PC-9 (cell line): ENCODE measurements at regions of chr22 and their contacts with region 1.

Region 1: GRCh38 chr22:31148953-31149627 is 8.8 kb upstream of the PLA2G3 start:
- DNase-seq: peak; percentile 60 to 71
- H3K4me3 ChIP-seq: no peak overlapping the region
- H3K27ac ChIP-seq: no peak overlapping the region
- H3K4me1 ChIP-seq: 0 out of 2 replicates have a peak, but pooled peaks cover 6% of the 10 kb centered on the region
- H3K27me3 ChIP-seq: no peaks in the 10 kb centered on the region
- CTCF ChIP-seq: peak; percentile 97

Region 2: DNA sequence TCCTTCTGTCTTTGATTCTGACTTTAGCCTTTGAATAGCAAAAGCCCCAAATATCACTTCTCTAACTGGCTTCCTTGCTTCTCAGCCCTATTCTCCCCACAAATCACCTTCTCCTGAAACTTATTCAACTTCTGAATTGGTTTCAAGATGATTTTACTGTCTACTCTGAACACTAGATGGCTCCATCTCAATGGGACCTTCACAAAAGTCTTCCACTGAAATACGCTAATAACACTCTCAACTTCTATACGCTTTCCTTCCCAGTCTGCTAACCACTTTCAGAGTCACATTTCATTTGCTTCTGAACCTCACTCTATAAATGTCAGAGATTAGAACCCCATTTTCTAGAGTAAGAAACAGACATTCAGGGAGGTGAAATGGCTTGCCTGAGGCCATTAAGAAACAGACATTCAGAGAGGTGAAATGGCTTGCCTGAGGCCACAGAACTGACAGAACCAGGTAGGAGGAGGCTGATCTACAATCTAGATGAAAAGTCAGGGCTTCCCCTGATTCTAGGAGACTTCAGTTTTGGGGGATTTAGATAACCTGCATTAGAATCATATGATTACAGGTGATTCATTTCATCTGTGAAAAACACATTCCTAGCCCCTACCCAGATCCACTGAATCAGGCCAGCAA is 201.2 kb before region 1 on chr22:
- CTCF ChIA-PET with region 1: no interaction called
- POLR2A ChIA-PET with region 1: no interaction called
- intact Hi-C with region 1: loop called (anchors 2 kb)
- DNase-seq: no peak
- H3K4me3 ChIP-seq: no peak overlapping the region
- H3K27ac ChIP-seq: no peak overlapping the region
- H3K4me1 ChIP-seq: no peaks in the 10 kb centered on the region
- H3K27me3 ChIP-seq: no peaks in the 10 kb centered on the region
- CTCF ChIP-seq: peak; percentile 75

Region 3: GRCh38 chr22:31080848-31081649 is 68.0 kb before region 1 on chr22 and contains the start of gene SMTN:
- CTCF ChIA-PET with region 1: no interaction called
- POLR2A ChIA-PET with region 1: no interaction called
- intact Hi-C with region 1: no loop called
- DNase-seq: peak; percentile 80 to 95
- H3K4me3 ChIP-seq: peak within 1 kb of the TSS; percentile 59
- H3K27ac ChIP-seq: no peak within 1 kb of the TSS
- H3K4me1 ChIP-seq: peaks cover 20% of the 10 kb centered on the region
- H3K27me3 ChIP-seq: no peaks in the 10 kb centered on the region
- CTCF ChIP-seq: no peak
- total RNA-seq, gene SMTN: 68.8 and 76.3 TPM in 2 replicates

Region 4: DNA sequence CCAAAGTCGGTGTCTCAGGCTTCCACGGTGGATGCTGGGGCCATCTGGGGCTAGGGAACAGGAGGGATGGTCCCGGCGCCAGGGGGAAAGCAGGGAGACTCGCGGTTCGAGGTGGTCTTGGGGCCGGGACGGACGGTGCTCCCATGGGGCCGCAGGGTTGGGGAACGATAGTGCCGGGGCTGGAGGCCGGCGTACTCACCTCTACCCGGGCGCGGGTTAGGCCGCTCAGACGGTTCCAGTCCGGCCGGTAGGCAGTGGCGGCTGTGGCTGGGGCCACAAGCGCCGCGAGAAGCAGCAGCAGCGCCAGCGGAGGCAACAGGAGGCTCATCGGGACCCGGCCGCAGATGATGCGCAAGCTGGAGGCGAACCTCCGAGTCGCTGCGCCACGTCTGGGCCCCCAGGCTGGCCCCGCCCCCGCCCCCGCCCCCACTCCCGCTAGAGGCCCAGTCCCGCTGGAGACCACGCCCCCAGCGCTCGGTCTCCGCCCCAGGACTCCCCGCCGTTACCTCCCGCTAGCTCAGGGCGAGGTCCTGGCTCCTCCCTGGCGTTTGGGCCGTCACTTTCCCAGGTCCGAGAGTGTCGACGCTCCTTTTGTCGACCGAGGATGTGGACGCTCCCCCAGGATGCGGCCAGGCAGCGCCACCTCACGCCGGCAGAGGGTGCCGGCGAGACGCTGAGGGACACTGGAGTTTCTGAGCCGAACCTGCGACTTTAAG is 41.8 kb before region 1 on chr22 and contains the start of gene SELENOM:
- CTCF ChIA-PET with region 1: interaction called, 7 read pairs
- POLR2A ChIA-PET with region 1: no interaction called
- intact Hi-C with region 1: loop called (anchors 1 kb)
- DNase-seq: peak; percentile 93 to 97
- H3K4me3 ChIP-seq: peak within 1 kb of the TSS; percentile 54
- H3K27ac ChIP-seq: no peak within 1 kb of the TSS
- H3K4me1 ChIP-seq: peaks cover 20% of the 10 kb centered on the region
- H3K27me3 ChIP-seq: no peaks in the 10 kb centered on the region
- CTCF ChIP-seq: peak; percentile 96
- total RNA-seq, gene SELENOM: 20.7 and 23.3 TPM in 2 replicates

Region 5: GRCh38 chr22:31272522-31273446 is 123.7 kb after region 1 on chr22:
- CTCF ChIA-PET with region 1: interaction called, 4 read pairs
- POLR2A ChIA-PET with region 1: no interaction called
- intact Hi-C with region 1: loop called (anchors 2 kb)
- DNase-seq: peak; percentile 55 to 71
- H3K4me3 ChIP-seq: no peak overlapping the region
- H3K27ac ChIP-seq: no peak overlapping the region
- H3K4me1 ChIP-seq: peaks cover 50% of the 10 kb centered on the region
- H3K27me3 ChIP-seq: no peaks in the 10 kb centered on the region
- CTCF ChIP-seq: peak; percentile 88